IMR-90 (cell line): ENCODE measurements at regions of chr10 and their contacts with region 1.

Region 1: GRCh38 chr10:77692782-77693181 is 55.2 kb upstream of the KCNMA1 start:
- DNase-seq: peak; percentile 68
- ATAC-seq: peak; percentile 89
- H3K4me3 ChIP-seq: no peak overlapping the region
- H3K27ac ChIP-seq: no peak overlapping the region
- H3K4me1 ChIP-seq: no peaks in the 10 kb centered on the region
- H3K27me3 ChIP-seq: peaks cover 46% of the 10 kb centered on the region
- CTCF ChIP-seq: peak; percentile 28; the same call in 1 of the 2 replicates
- POLR2A ChIP-seq: no peak
- RAD21 ChIP-seq: peak; percentile 35; the same call in 1 of the 2 replicates

Region 2: GRCh38 chr10:78196964-78197363 is 504.2 kb after region 1 on chr10:
- CTCF ChIA-PET with region 1: no interaction called
- POLR2A ChIA-PET with region 1: interaction called, 15 read pairs
- dilution Hi-C with region 1: no loop called
- in situ Hi-C with region 1: no loop called
- intact Hi-C with region 1: no loop called
- DNase-seq: peak; percentile 96
- ATAC-seq: peak; percentile 88
- H3K4me3 ChIP-seq: no peak overlapping the region
- H3K27ac ChIP-seq: no peak overlapping the region
- H3K4me1 ChIP-seq: peaks cover 20% of the 10 kb centered on the region
- H3K27me3 ChIP-seq: 0 out of 2 replicates have a peak, but pooled peaks cover 4% of the 10 kb centered on the region
- CTCF ChIP-seq: no peak
- POLR2A ChIP-seq: no peak
- RAD21 ChIP-seq: 0 out of 2 replicates have a peak, but pooled peaks have one; percentile 13